ENCODE measurements at regions of chr4 and their contacts with region 1.

Region 1: DNA sequence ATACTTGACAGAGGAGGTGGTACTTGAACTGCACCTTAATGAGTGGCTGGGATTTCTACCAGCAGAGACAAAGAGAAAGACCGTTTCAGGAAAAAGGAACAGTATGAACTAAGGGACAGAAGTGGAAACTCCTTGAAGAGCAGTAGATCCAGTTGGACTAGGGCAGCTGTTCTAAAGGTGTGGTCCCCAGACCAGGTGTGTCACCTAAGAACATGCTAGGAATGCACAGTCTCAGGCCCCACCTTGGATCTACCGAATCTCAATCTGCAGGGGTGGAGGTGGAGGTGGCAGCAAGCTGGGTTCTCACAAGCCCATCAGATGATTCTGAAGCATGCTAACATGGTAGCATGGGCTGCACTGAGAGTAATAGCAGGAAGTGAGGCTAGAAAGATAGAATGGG is 22.3 kb downstream of the DAPP1 start:
- DNase-seq: no peak
- H3K4me3 ChIP-seq: no peak overlapping the region
- H3K27ac ChIP-seq: no peak overlapping the region
- H3K4me1 ChIP-seq: no peaks in the 10 kb centered on the region
- H3K27me3 ChIP-seq: no peaks in the 10 kb centered on the region
- CTCF ChIP-seq: no peak

Region 2: DNA sequence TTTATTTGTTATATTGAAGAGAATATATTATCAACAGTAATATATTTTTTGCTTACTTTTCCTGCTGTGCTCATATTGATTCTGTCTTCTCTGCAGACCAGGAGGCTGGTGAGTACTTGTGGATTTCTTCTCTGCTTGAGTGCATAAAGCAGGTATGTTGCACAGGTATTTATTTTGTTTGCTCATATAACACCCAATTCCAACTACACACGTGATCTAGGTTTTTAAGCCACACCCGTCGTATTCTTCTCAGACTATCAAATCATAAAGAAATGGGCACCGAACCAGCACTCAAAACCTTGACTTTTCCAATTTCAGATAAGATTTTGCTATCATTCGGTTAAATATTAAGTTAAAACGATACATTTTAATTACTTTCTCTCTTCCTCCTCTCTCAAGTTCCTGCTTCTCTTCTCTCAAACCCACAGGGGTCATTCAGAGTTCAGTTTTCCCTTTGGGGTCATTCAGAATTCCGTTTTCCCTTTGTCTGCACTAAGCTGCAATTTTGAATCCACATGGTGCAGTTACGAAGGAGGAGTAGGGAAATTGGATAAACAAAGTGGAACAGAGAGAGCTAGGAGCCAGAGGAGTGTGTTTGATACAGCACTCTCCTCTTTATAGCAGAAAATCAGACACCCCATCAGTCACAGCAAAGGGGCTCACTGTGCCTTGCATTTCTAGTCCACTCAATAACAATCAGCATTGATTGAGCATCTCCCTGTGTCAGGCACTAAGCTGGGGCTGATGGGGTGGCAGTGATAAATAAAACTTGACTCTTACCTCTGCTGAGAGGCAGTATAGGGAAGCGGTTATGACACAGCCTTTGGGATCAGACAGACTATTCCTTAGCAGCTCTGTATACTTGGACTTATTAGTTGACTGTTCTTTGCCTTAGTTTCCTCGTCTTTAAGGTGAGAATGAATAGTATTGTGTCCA is 486.1 kb before region 1 on chr4 and contains the start of gene ADH1C:
- CTCF ChIA-PET with region 1: no interaction called
- POLR2A ChIA-PET with region 1: interaction called, 20 read pairs
- intact Hi-C with region 1: no loop called
- DNase-seq: no peak
- H3K4me3 ChIP-seq: peak within 1 kb of the TSS; percentile 15; the same call in 1 of the 2 replicates
- H3K27ac ChIP-seq: no peak within 1 kb of the TSS
- H3K4me1 ChIP-seq: peaks cover 7% of the 10 kb centered on the region
- H3K27me3 ChIP-seq: no peaks in the 10 kb centered on the region
- CTCF ChIP-seq: no peak
- total RNA-seq, gene ADH1C: 0.50 and 0.63 TPM in 2 replicates

Region 3: GRCh38 chr4:99633772-99634171 is 205.2 kb before region 1 on chr4:
- CTCF ChIA-PET with region 1: no interaction called
- POLR2A ChIA-PET with region 1: no interaction called
- intact Hi-C with region 1: no loop called
- DNase-seq: no peak
- H3K4me3 ChIP-seq: no peak overlapping the region
- H3K27ac ChIP-seq: no peak overlapping the region
- H3K4me1 ChIP-seq: no peaks in the 10 kb centered on the region
- H3K27me3 ChIP-seq: no peaks in the 10 kb centered on the region
- CTCF ChIP-seq: no peak

Measured in PC-9 (cell line).